Mammary epithelial cell (primary cell): ENCODE measurements at regions of chr2 and their contacts with region 1.

Region 1: GRCh38 chr2:53129851-53130250 is 637.8 kb upstream of the CHAC2 start:
- DNase-seq: peak; percentile 83
- H3K4me3 ChIP-seq: no peak overlapping the region
- H3K27ac ChIP-seq: peak overlapping the region; percentile 47
- H3K4me1 ChIP-seq: peaks cover 25% of the 10 kb centered on the region
- H3K27me3 ChIP-seq: no peaks in the 10 kb centered on the region
- CTCF ChIP-seq: no peak

Region 2: GRCh38 chr2:52934354-52934898 is 195.4 kb before region 1 on chr2:
- CTCF ChIA-PET with region 1: no interaction called
- dilution Hi-C with region 1: no loop called
- in situ Hi-C with region 1: no loop called
- intact Hi-C with region 1: loop called (anchors 5 kb)
- DNase-seq: peak; percentile 96
- H3K4me3 ChIP-seq: peak overlapping the region in 2 of 3 experiments; percentile 29 to 34
- H3K27ac ChIP-seq: peak overlapping the region; percentile 99
- H3K4me1 ChIP-seq: peaks cover 29% of the 10 kb centered on the region
- H3K27me3 ChIP-seq: no peaks in the 10 kb centered on the region
- CTCF ChIP-seq: no peak

Region 3: DNA sequence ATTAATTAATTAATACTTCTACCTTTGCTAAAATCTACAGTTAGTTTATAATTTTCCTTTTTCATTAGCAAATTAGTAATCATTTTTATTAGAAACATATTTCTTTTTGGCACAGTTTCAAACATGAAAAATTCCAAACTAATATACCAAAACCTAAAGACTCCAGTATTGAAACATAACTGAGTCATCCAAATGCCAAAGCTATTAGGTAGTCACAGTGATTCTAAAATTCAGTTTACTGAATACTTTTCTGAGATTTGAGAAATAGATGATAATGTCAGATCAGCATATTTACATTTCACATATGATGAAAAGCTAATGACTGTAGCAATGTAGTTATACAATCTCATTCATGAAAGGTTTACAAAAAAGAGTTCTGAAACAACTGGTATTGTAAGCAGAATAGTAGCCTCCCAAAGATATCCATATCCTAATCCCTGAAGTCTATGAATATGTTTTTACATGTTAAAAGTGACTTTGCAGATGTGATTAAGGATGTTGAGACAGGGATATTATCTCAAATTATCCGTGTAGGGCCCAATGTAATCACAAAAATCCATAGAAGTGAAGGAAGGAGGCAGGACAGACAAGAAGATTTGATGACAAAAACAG is 42.5 kb before region 1 on chr2:
- CTCF ChIA-PET with region 1: no interaction called
- dilution Hi-C with region 1: no loop called
- in situ Hi-C with region 1: no loop called
- intact Hi-C with region 1: loop called (anchors 2 kb)
- DNase-seq: peak; percentile 67
- H3K4me3 ChIP-seq: no peak overlapping the region
- H3K27ac ChIP-seq: peak overlapping the region; percentile 41
- H3K4me1 ChIP-seq: peaks cover 5% of the 10 kb centered on the region
- H3K27me3 ChIP-seq: no peaks in the 10 kb centered on the region
- CTCF ChIP-seq: no peak

Region 4: GRCh38 chr2:53150146-53150545 is 20.3 kb after region 1 on chr2:
- CTCF ChIA-PET with region 1: no interaction called
- dilution Hi-C with region 1: no loop called
- in situ Hi-C with region 1: no loop called
- intact Hi-C with region 1: loop called (anchors 1 kb)
- DNase-seq: no peak
- H3K4me3 ChIP-seq: no peak overlapping the region
- H3K27ac ChIP-seq: no peak overlapping the region
- H3K4me1 ChIP-seq: no peaks in the 10 kb centered on the region
- H3K27me3 ChIP-seq: no peaks in the 10 kb centered on the region
- CTCF ChIP-seq: no peak

Region 5: GRCh38 chr2:53217250-53217649 is 87.4 kb after region 1 on chr2:
- CTCF ChIA-PET with region 1: no interaction called
- dilution Hi-C with region 1: loop called (anchors 5 kb)
- in situ Hi-C with region 1: no loop called
- intact Hi-C with region 1: no loop called
- DNase-seq: no peak
- H3K4me3 ChIP-seq: no peak overlapping the region
- H3K27ac ChIP-seq: no peak overlapping the region
- H3K4me1 ChIP-seq: no peaks in the 10 kb centered on the region
- H3K27me3 ChIP-seq: no peaks in the 10 kb centered on the region
- CTCF ChIP-seq: no peak